A673 (cell line): ENCODE measurements at regions of chr2 and their contacts with region 1.

Region 1: DNA sequence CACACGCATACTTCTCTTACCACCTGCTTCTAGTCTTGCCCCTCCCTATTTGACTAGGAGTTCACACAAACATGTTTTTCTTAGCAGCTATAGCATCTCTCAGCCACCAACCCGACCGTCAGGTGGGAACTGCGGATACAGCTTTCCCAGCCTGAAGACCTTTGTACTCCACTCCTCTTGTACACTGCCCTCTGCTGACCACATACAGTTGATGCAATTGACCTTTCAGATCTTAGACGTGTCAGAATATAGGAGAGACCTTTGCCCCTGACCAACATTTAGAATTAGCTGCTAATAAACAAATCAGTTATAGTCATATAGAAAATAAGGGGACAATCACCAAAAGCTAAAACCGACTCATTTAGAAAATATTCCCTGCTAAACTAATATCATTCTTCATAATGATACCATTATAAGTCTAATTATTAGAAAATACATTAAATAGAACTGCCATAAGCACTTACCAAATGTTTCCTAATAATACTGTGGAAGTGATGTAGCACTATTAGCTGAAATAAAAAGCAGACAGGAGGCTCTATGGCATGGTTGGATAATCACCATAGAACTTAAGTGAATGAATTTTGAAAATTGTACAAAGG is 208.4 kb downstream of the RAD51AP2 start:
- DNase-seq: peak; percentile 68
- H3K4me3 ChIP-seq: no peak overlapping the region
- H3K27ac ChIP-seq: no peak overlapping the region
- H3K4me1 ChIP-seq: no peaks in the 10 kb centered on the region
- H3K27me3 ChIP-seq: no peaks in the 10 kb centered on the region
- CTCF ChIP-seq: peak; percentile 71

Region 2: GRCh38 chr2:17010104-17010503 is 299.7 kb before region 1 on chr2:
- CTCF ChIA-PET with region 1: no interaction called
- POLR2A ChIA-PET with region 1: no interaction called
- intact Hi-C with region 1: no loop called
- DNase-seq: no peak
- H3K4me3 ChIP-seq: no peak overlapping the region
- H3K27ac ChIP-seq: no peak overlapping the region
- H3K4me1 ChIP-seq: no peaks in the 10 kb centered on the region
- H3K27me3 ChIP-seq: peaks cover 2% of the 10 kb centered on the region
- CTCF ChIP-seq: no peak

Region 3: DNA sequence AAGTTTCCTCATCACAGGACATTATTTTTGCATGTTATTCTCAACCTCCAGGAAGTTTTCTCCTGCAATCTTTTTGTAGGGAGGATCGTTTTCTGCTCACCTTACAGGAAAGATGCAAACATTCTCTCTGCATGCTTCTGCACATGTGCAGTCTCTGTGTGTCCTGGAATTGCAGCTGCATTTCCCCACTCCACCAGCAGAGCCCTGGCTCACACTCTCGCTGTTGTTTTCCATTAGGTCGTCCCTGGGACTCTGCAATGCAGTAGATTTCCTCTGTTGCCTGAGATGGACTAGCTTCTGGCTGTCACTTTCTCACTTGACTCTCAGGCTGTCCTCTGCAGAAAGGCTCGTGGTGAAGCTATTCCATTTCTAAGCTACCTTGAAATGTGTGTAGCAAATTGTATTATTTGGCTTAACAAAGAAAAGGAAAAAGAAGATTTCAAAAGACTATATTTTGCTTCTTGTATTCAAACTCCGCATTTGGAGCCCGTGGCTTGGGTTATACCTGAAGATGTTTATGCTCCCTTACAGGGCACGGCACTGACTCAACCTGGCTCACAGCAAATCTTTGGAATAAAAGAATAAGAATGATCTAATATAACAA is 138.3 kb before region 1 on chr2:
- CTCF ChIA-PET with region 1: interaction called, 3 read pairs
- POLR2A ChIA-PET with region 1: no interaction called
- intact Hi-C with region 1: loop called (anchors 5 kb)
- DNase-seq: peak; percentile 42
- H3K4me3 ChIP-seq: no peak overlapping the region
- H3K27ac ChIP-seq: no peak overlapping the region
- H3K4me1 ChIP-seq: no peaks in the 10 kb centered on the region
- H3K27me3 ChIP-seq: no peaks in the 10 kb centered on the region
- CTCF ChIP-seq: peak; percentile 63

Region 4: GRCh38 chr2:17326717-17327116 is 16.9 kb after region 1 on chr2:
- CTCF ChIA-PET with region 1: no interaction called
- POLR2A ChIA-PET with region 1: no interaction called
- intact Hi-C with region 1: no loop called
- DNase-seq: no peak
- H3K4me3 ChIP-seq: no peak overlapping the region
- H3K27ac ChIP-seq: no peak overlapping the region
- H3K4me1 ChIP-seq: no peaks in the 10 kb centered on the region
- H3K27me3 ChIP-seq: no peaks in the 10 kb centered on the region
- CTCF ChIP-seq: no peak